ENCODE measurements at regions of chr11 and their contacts with region 1.

Region 1: DNA sequence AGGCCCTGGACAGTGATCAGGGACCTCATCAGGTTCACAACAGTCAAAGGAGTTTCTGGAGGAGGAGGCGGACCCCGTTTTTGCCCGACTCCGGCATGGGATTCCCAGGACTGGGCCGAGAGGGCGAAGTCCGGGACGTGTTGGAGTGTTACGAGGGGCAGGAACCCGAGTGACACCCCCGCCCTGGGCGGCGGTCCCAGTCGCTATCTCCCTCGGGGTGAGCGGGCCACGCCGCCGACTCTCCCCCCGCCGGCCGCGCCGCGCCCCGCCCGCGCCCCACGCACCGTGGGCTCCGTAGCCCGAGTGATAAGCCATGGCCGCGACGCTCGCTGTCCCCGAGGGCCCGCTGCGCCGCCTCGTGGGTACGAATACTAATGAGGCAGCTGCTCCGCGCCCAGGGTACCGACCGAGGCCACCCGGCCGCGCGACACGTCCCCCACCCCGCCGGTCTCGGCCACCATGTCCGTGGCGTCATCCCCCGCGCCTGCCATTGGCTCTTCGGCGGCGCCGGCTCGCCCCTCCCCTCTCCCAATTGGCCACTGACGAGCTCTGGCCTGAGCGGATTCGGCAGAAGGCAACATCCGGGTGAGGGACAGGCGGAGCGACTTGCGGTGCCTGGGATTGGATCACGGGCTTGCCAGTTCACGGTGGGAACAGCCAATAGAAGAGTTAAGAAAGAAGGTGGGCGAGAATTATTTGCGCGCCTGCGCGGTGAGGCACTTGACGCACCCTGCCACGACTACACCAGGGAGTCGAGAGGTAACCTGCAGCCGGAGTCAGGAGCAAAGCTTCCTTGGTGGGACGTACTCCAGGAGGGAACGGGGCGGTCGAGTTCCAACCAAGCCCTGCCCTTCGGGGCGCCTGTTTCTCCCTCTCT is at the start of gene YIF1A:
- DNase-seq: peak; percentile 92 to 99 (median 99)
- ATAC-seq: peak; percentile 96
- H3K4me3 ChIP-seq: peak within 1 kb of the TSS; percentile 99
- H3K4me3 Mint-ChIP-seq: peak within 1 kb of the TSS; percentile 86 to 96 (median 90)
- H3K27ac ChIP-seq: peak within 1 kb of the TSS; percentile 76
- H3K27ac Mint-ChIP-seq: peak within 1 kb of the TSS; percentile 74 to 97 (median 92)
- H3K4me1 ChIP-seq: peaks cover 18 to 19% of the 10 kb centered on the region in 2 donors
- H3K4me1 Mint-ChIP-seq: peaks cover 17 to 46% (median 37%) of the 10 kb centered on the region in 7 donors
- H3K27me3 ChIP-seq: peaks cover 0 to 7% of the 10 kb centered on the region in 2 donors
- H3K27me3 Mint-ChIP-seq: peaks cover 13 to 35% (median 13%) of the 10 kb centered on the region in 5 donors
- total RNA-seq, gene YIF1A: 25.0 to 66.2 (median 33.3) TPM

Region 2: GRCh38 chr11:66277471-66278362 is 11.2 kb before region 1 on chr11 and contains the start of gene CNIH2:
- CTCF ChIA-PET with region 1: no interaction called
- POLR2A ChIA-PET with region 1: interaction called, 11 read pairs
- intact Hi-C with region 1: no loop called
- DNase-seq: peak in 7 of 9 donors; percentile 37 to 71 (median 51)
- ATAC-seq: peak; percentile 44
- H3K4me3 ChIP-seq: no peak within 1 kb of the TSS
- H3K4me3 Mint-ChIP-seq: peak within 1 kb of the TSS in 9 of 10 donors; percentile 47 to 81 (median 66)
- H3K27ac ChIP-seq: peak within 1 kb of the TSS; percentile 50
- H3K27ac Mint-ChIP-seq: peak within 1 kb of the TSS in 4 of 9 donors; percentile 37 to 80 (median 50)
- H3K4me1 ChIP-seq: peaks cover 20 to 24% of the 10 kb centered on the region in 2 donors
- H3K4me1 Mint-ChIP-seq: peaks cover 20 to 46% (median 29%) of the 10 kb centered on the region in 7 donors
- H3K27me3 ChIP-seq: no peaks in the 10 kb centered on the region
- H3K27me3 Mint-ChIP-seq: peaks cover 0 to 14% (median 0%) of the 10 kb centered on the region in 5 donors
- total RNA-seq, gene CNIH2: 1.3 to 12.3 (median 2.9) TPM

Region 3: GRCh38 chr11:66317723-66318599 is 29.1 kb after region 1 on chr11:
- CTCF ChIA-PET with region 1: no interaction called
- POLR2A ChIA-PET with region 1: interaction called, 15 read pairs
- intact Hi-C with region 1: no loop called
- DNase-seq: peak in 7 of 9 donors; percentile 79 to 96 (median 86)
- ATAC-seq: peak; percentile 93
- H3K4me3 ChIP-seq: peak overlapping the region; percentile 54
- H3K4me3 Mint-ChIP-seq: peak overlapping the region; percentile 45 to 89 (median 83)
- H3K27ac ChIP-seq: peak overlapping the region; percentile 99
- H3K27ac Mint-ChIP-seq: peak overlapping the region; percentile 88 to 100 (median 99)
- H3K4me1 ChIP-seq: peaks cover 32 to 60% of the 10 kb centered on the region in 2 donors
- H3K4me1 Mint-ChIP-seq: peaks cover 39 to 78% (median 63%) of the 10 kb centered on the region in 7 donors
- H3K27me3 ChIP-seq: no peaks in the 10 kb centered on the region
- H3K27me3 Mint-ChIP-seq: peaks cover 0 to 9% (median 0%) of the 10 kb centered on the region in 5 donors

Region 4: GRCh38 chr11:66344550-66345315 is 55.8 kb after region 1 on chr11 and contains the start of gene BRMS1:
- CTCF ChIA-PET with region 1: no interaction called
- POLR2A ChIA-PET with region 1: interaction called, 11 read pairs
- intact Hi-C with region 1: loop called in 1 of 2 experiments (anchors 1 kb)
- DNase-seq: peak; percentile 85 to 98 (median 93)
- ATAC-seq: peak; percentile 94
- H3K4me3 ChIP-seq: peak within 1 kb of the TSS; percentile 73
- H3K4me3 Mint-ChIP-seq: peak within 1 kb of the TSS; percentile 94 to 98 (median 96)
- H3K27ac ChIP-seq: peak within 1 kb of the TSS; percentile 92
- H3K27ac Mint-ChIP-seq: peak within 1 kb of the TSS; percentile 91 to 98 (median 96)
- H3K4me1 ChIP-seq: peaks cover 30 to 36% of the 10 kb centered on the region in 2 donors
- H3K4me1 Mint-ChIP-seq: peaks cover 25 to 62% (median 52%) of the 10 kb centered on the region in 7 donors
- H3K27me3 ChIP-seq: no peaks in the 10 kb centered on the region
- H3K27me3 Mint-ChIP-seq: peaks cover 0 to 4% (median 0%) of the 10 kb centered on the region in 5 donors
- total RNA-seq, gene BRMS1: 35.9 to 50.8 (median 48.4) TPM

Region 5: DNA sequence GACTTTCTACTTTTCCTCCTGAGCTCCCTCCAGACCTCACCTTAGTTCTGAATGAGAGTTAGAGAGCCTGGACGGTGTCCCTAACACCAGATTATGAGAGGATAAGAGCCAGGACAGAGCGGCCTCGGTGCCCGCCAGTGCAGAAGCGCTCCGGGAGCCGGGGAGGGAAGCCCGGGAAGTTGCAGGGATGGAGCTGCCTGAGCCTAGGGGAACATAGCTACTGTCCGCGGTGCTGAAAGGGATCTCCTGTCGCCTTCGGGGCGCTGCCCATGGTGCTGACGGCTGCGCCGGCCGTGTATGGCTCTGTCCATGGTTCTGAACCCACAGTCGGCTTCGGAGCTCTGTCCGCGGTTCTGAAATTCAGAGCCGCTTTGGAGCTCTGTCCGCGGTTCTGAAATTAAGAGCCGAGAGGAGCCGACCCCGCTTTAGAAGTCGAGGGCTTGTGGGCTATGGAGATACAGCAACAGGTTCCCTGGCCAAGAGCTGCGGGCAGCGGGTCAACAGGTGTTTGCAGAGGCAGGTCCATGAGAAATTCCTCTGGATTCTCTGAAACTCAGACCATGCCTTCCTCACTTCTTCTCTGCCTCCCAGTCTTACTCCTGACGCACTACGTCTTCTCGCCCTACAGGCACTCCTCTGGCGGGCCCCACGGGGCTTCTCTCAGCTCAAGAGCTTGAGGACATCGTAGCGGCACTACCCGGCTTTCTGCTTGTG is 132.7 kb after region 1 on chr11:
- CTCF ChIA-PET with region 1: no interaction called
- POLR2A ChIA-PET with region 1: interaction called, 9 read pairs
- intact Hi-C with region 1: loop called (anchors 1 kb)
- DNase-seq: peak; percentile 79 to 94 (median 86)
- ATAC-seq: peak; percentile 100
- H3K4me3 ChIP-seq: no peak overlapping the region
- H3K4me3 Mint-ChIP-seq: peak overlapping the region in 4 of 10 donors; percentile 20 to 73 (median 41)
- H3K27ac ChIP-seq: no peak overlapping the region
- H3K27ac Mint-ChIP-seq: peak overlapping the region in 6 of 9 donors; percentile 31 to 85 (median 58)
- H3K4me1 ChIP-seq: no peaks in the 10 kb centered on the region
- H3K4me1 Mint-ChIP-seq: peaks cover 9 to 22% (median 10%) of the 10 kb centered on the region in 7 donors
- H3K27me3 ChIP-seq: peaks cover 7 to 22% of the 10 kb centered on the region in 2 donors
- H3K27me3 Mint-ChIP-seq: peaks cover 23 to 29% (median 29%) of the 10 kb centered on the region in 5 donors

Measured in naive thymus-derived CD4-positive, alpha-beta T cell (primary cell).